ENCODE measurements at regions of chr12 and their contacts with region 1.

Region 1: GRCh38 chr12:97159362-97159761 is 252.3 kb downstream of the NEDD1 start:
- DNase-seq: no peak
- ATAC-seq: no peak
- H3K4me3 ChIP-seq: no peak overlapping the region
- H3K27ac ChIP-seq: no peak overlapping the region
- H3K4me1 ChIP-seq: no peaks in the 10 kb centered on the region
- H3K27me3 ChIP-seq: no peaks in the 10 kb centered on the region
- CTCF ChIP-seq: no peak

Region 2: DNA sequence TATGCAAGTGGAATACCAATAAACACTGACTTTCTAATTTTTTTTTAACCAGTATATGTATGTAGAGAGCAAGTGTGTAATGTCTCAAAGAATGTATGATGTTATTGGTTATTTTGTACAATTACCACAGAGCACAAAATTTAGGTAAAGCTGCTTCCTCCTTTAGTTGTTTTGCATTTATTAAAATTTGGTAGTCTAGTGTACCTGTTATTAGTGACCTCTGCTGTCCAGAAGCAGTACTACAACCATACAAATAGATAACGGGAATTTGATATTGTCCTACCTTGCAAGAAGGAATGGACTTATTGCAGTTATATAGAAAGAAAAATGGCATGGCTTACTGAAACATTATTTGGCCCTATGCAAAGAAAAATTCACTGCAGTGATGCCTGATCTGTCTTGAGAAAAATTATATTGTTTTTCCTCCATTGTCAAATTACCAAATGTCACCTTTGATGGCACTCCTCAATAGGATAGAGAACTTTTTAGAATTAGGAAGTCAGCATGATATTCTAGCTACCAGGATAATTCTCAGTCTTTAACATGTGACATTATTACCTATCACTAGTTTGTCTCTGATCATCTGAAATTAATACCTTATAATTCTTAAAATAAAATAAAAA is 149.3 kb after region 1 on chr12:
- intact Hi-C with region 1: loop called in 2 of 10 experiments (anchors 10 kb)
- DNase-seq: peak in 1 of 2 donors; percentile 20
- ATAC-seq: no peak
- H3K4me3 ChIP-seq: no peak overlapping the region
- H3K27ac ChIP-seq: no peak overlapping the region
- H3K4me1 ChIP-seq: peaks cover 0 to 6% (median 0%) of the 10 kb centered on the region in 9 donors
- H3K27me3 ChIP-seq: peaks cover 0 to 10% (median 0%) of the 10 kb centered on the region in 7 donors
- CTCF ChIP-seq: peak; percentile 52 to 87 (median 77)

Measured in heart right ventricle (tissue), 16 donors.